SK-N-SH (cell line): ENCODE measurements at regions of chr2 and their contacts with region 1.

Region 1: GRCh38 chr2:44638649-44639048 is 276.9 kb downstream of the CAMKMT start:
- DNase-seq: peak; percentile 55
- H3K4me3 ChIP-seq: no peak overlapping the region
- H3K27ac ChIP-seq: peak overlapping the region in 1 of 2 experiments; percentile 97; a peak in 2 of 4 replicates
- H3K4me1 ChIP-seq: peaks cover 0 to 30% of the 10 kb centered on the region in 2 experiments; a peak in 2 of 4 replicates
- H3K27me3 ChIP-seq: no peaks in the 10 kb centered on the region
- CTCF ChIP-seq: no peak
- EP300 ChIP-seq: peak in 1 of 2 experiments; percentile 87; a peak in 2 of 4 replicates
- RAD21 ChIP-seq: peak; percentile 39

Region 2: DNA sequence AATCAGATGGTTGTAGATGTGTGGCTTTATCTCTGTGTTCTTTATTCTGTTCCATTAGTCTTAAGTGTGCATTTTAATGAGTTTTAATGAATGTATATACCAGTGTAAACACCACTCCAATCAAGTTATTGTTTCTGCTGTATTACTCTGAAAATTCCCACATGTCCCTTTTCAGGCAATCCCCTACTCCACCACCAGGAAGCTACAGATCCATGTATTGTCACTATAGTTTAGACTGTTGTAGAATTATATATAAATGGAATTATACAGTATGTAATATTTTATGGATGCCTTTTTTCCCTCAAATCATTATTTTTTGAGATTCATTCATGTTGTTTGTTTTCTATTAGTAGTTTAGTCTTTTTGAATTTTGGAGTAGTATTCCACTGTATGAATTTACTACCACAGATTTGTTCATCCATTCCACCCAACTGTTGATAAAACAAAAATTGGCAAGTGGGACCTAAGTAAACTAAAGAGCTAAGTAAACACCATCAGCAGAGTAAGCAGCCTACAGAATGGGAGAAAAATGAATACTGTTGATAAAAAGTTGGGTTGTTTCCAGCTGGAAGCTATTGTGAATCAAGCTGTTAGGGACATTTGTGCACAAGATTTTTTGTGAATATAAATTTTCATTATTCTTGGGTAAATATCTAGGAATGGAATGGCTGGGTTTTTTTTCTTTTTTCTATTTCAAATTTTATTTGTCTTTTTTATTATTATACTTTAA is 14.9 kb before region 1 on chr2:
- CTCF ChIA-PET with region 1: interaction called, 12 read pairs
- POLR2A ChIA-PET with region 1: no interaction called
- DNase-seq: no peak
- H3K4me3 ChIP-seq: no peak overlapping the region
- H3K27ac ChIP-seq: no peak overlapping the region
- H3K4me1 ChIP-seq: no peaks in the 10 kb centered on the region
- H3K27me3 ChIP-seq: no peaks in the 10 kb centered on the region
- CTCF ChIP-seq: peak; percentile 37; the same call in 1 of the 2 replicates
- EP300 ChIP-seq: no peak
- RAD21 ChIP-seq: no peak